Naive thymus-derived CD4-positive, alpha-beta T cell (primary cell): ENCODE measurements at regions of chr2 and their contacts with region 1.

Region 1: GRCh38 chr2:25376750-25377621 is 35.3 kb upstream of the DNMT3A start:
- DNase-seq: peak; percentile 89 to 94 (median 92)
- ATAC-seq: peak; percentile 99
- H3K4me3 ChIP-seq: peak overlapping the region; percentile 53
- H3K4me3 Mint-ChIP-seq: peak overlapping the region; percentile 67 to 87 (median 74)
- H3K27ac ChIP-seq: peak overlapping the region; percentile 66
- H3K27ac Mint-ChIP-seq: peak overlapping the region; percentile 90 to 97 (median 94)
- H3K4me1 ChIP-seq: peaks cover 28 to 31% of the 10 kb centered on the region in 2 donors
- H3K4me1 Mint-ChIP-seq: peaks cover 29 to 49% (median 32%) of the 10 kb centered on the region in 7 donors
- H3K27me3 ChIP-seq: no peaks in the 10 kb centered on the region
- H3K27me3 Mint-ChIP-seq: no peaks in the 10 kb centered on the region

Region 2: DNA sequence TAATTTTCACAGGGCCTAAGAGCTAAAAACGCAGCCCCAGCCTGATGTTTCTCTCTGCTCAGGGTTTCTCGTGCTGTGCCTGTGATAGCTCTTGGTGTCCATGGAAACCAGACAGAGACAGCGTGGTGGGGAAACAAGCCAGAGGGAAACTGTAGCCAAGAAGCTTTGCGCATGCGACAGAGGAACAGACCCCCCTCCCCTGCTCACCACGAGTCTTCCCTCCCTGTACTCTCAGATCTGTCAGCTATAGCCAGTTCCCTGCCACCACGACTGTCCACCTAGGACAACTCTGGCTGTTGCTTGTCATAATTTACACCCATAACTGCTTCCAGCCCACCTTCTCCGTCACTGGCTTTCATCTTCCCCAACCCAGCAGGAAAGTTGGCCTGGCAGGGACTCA is 392.1 kb before region 1 on chr2:
- CTCF ChIA-PET with region 1: no interaction called
- POLR2A ChIA-PET with region 1: no interaction called
- intact Hi-C with region 1: no loop called
- DNase-seq: no peak
- ATAC-seq: peak; percentile 37
- H3K4me3 ChIP-seq: no peak overlapping the region
- H3K4me3 Mint-ChIP-seq: no peak overlapping the region
- H3K27ac ChIP-seq: no peak overlapping the region
- H3K27ac Mint-ChIP-seq: no peak overlapping the region
- H3K4me1 ChIP-seq: no peaks in the 10 kb centered on the region
- H3K4me1 Mint-ChIP-seq: no peaks in the 10 kb centered on the region
- H3K27me3 ChIP-seq: no peaks in the 10 kb centered on the region
- H3K27me3 Mint-ChIP-seq: peaks cover 0 to 6% (median 0%) of the 10 kb centered on the region in 5 donors

Region 3: GRCh38 chr2:25177211-25177611 is 199.8 kb before region 1 on chr2:
- CTCF ChIA-PET with region 1: no interaction called
- POLR2A ChIA-PET with region 1: no interaction called
- intact Hi-C with region 1: no loop called
- DNase-seq: no peak
- ATAC-seq: no peak
- H3K4me3 ChIP-seq: no peak overlapping the region
- H3K4me3 Mint-ChIP-seq: no peak overlapping the region
- H3K27ac ChIP-seq: no peak overlapping the region
- H3K27ac Mint-ChIP-seq: no peak overlapping the region
- H3K4me1 ChIP-seq: no peaks in the 10 kb centered on the region
- H3K4me1 Mint-ChIP-seq: peaks cover 0 to 6% (median 3%) of the 10 kb centered on the region in 7 donors
- H3K27me3 ChIP-seq: no peaks in the 10 kb centered on the region
- H3K27me3 Mint-ChIP-seq: peaks cover 15 to 37% (median 18%) of the 10 kb centered on the region in 5 donors

Region 4: DNA sequence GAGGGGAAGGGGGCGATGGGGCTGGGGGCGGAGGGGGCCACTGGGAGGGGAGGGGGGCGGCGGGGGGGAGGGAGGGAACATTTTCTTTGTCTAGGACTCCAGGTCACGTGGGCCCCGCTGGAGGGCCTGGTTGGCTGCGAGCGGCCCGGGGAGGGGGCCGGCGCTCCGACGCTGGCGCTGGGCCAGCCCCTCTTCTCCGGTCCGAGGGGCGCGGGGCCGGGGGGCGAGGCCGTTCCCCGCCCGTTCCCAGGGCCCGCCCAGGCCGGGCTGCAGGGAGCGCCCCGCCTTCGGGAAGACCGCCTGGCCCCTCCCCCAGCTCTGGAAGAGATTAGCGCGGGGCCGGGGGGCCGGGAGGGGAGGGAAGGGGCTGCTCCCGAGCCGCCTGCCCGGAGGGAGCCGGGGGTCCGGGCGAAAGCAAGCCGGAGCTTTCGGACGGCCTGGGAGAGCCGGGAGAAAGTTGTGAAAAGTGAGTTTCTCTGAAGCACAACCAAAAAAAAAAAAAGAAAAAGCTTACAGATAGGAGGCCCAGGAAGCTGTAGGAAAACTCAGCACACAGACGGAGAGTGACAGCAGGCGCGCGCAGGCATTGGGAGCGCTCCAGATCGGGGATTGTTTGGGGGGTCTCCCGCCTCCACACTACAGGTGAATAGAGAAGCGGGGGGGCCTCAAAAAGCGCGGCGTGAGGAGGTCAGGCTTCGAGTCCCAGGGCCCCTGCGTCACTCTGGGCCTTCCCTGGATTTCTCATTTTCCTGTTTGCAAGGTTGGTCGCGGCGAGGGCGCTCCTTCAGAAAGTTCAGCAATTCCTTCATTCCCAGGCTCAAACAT is 124.5 kb before region 1 on chr2:
- CTCF ChIA-PET with region 1: interaction called, 4 read pairs
- POLR2A ChIA-PET with region 1: interaction called, 3 read pairs
- intact Hi-C with region 1: loop called (anchors 1 to 2 kb)
- DNase-seq: peak; percentile 36 to 67 (median 56)
- ATAC-seq: peak; percentile 77
- H3K4me3 ChIP-seq: peak overlapping the region; percentile 53
- H3K4me3 Mint-ChIP-seq: peak overlapping the region; percentile 82 to 91 (median 90)
- H3K27ac ChIP-seq: peak overlapping the region; percentile 87
- H3K27ac Mint-ChIP-seq: peak overlapping the region; percentile 70 to 93 (median 85)
- H3K4me1 ChIP-seq: peaks cover 6 to 22% of the 10 kb centered on the region in 2 donors
- H3K4me1 Mint-ChIP-seq: peaks cover 26 to 55% (median 45%) of the 10 kb centered on the region in 7 donors
- H3K27me3 ChIP-seq: no peaks in the 10 kb centered on the region
- H3K27me3 Mint-ChIP-seq: no peaks in the 10 kb centered on the region

Region 5: GRCh38 chr2:25265802-25266201 is 111.2 kb before region 1 on chr2:
- CTCF ChIA-PET with region 1: no interaction called
- POLR2A ChIA-PET with region 1: no interaction called
- intact Hi-C with region 1: no loop called
- DNase-seq: peak in 3 of 9 donors; percentile 31 to 56 (median 42)
- ATAC-seq: peak; percentile 67
- H3K4me3 ChIP-seq: no peak overlapping the region
- H3K4me3 Mint-ChIP-seq: peak overlapping the region in 7 of 10 donors; percentile 14 to 58 (median 38)
- H3K27ac ChIP-seq: peak overlapping the region; percentile 60
- H3K27ac Mint-ChIP-seq: peak overlapping the region in 7 of 9 donors; percentile 64 to 90 (median 83)
- H3K4me1 ChIP-seq: peaks cover 14 to 30% of the 10 kb centered on the region in 2 donors
- H3K4me1 Mint-ChIP-seq: peaks cover 26 to 69% (median 60%) of the 10 kb centered on the region in 7 donors
- H3K27me3 ChIP-seq: no peaks in the 10 kb centered on the region
- H3K27me3 Mint-ChIP-seq: no peaks in the 10 kb centered on the region

Region 6: DNA sequence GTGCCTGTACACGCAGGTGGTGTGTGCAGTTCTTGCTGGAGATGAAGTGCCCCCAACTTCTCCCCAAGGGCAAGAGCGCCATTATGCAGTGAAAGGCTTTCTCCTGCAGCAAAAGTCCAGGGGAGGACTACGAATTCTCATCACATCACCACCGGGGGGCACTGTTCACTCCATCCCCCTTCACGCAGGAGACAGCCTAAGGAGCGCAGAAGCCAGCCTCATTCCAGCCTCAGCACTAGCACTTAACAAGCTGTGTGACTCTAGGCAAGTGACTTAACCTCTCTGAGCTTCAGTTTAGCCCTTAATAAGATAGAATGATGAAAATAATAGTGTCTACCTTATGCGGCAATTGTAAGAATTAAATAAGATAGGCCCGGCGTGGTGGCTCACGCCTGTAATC is 67.6 kb before region 1 on chr2:
- CTCF ChIA-PET with region 1: interaction called, 12 read pairs
- POLR2A ChIA-PET with region 1: interaction called, 5 read pairs
- intact Hi-C with region 1: loop called (anchors 1 kb)
- DNase-seq: peak; percentile 48 to 70 (median 62)
- ATAC-seq: peak; percentile 72
- H3K4me3 ChIP-seq: no peak overlapping the region
- H3K4me3 Mint-ChIP-seq: peak overlapping the region in 5 of 10 donors; percentile 13 to 47 (median 28)
- H3K27ac ChIP-seq: no peak overlapping the region
- H3K27ac Mint-ChIP-seq: peak overlapping the region in 8 of 9 donors; percentile 36 to 89 (median 66)
- H3K4me1 ChIP-seq: peaks cover 21 to 60% of the 10 kb centered on the region in 2 donors
- H3K4me1 Mint-ChIP-seq: peaks cover 48 to 95% (median 80%) of the 10 kb centered on the region in 7 donors
- H3K27me3 ChIP-seq: no peaks in the 10 kb centered on the region
- H3K27me3 Mint-ChIP-seq: no peaks in the 10 kb centered on the region

Region 7: DNA sequence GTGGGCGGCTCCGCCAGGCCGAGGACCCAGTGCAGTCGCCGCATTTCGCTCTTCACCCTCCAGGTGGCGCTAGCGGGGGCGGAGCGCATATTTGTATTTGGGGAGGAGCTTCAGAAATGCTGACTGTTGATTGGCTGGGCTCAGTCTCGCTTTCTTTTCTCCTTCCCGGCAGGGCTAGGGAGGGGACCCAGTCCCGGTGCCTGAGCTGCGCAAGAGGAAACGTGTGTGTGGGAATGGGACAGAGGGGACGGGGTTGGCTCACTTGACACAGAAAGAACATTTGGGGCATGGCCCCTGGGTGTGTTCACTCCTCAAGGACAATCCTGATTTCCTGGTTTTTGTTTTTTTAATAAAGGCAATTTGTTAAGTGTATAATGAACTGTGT is 14.9 kb before region 1 on chr2:
- CTCF ChIA-PET with region 1: interaction called, 34 read pairs
- POLR2A ChIA-PET with region 1: interaction called, 35 read pairs
- intact Hi-C with region 1: loop called (anchors 1 kb)
- DNase-seq: peak; percentile 86 to 99 (median 93)
- ATAC-seq: peak; percentile 98
- H3K4me3 ChIP-seq: peak overlapping the region; percentile 78
- H3K4me3 Mint-ChIP-seq: peak overlapping the region; percentile 83 to 95 (median 89)
- H3K27ac ChIP-seq: peak overlapping the region; percentile 81
- H3K27ac Mint-ChIP-seq: peak overlapping the region; percentile 84 to 96 (median 92)
- H3K4me1 ChIP-seq: peaks cover 3 to 4% of the 10 kb centered on the region in 2 donors
- H3K4me1 Mint-ChIP-seq: peaks cover 11 to 32% (median 25%) of the 10 kb centered on the region in 7 donors
- H3K27me3 ChIP-seq: no peaks in the 10 kb centered on the region
- H3K27me3 Mint-ChIP-seq: no peaks in the 10 kb centered on the region

Region 8: DNA sequence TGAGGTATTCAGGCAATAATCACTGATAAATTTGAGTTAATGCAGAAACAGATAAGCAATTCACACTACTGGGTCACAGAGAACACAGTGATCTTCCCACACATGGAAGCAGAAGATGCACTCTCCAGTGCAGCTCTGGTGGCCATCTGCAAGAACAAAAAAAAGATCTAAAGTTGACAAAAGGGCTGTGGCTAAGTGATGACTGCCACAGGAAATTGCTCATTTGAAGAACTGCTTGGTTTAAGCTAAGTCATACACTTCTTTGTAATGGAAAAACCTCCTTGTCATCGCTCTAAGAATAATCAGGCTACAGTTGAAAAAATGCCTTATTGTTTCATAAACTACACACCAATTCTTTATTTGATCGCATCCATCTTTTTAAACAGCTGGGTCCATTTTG is 181.3 kb after region 1 on chr2:
- CTCF ChIA-PET with region 1: no interaction called
- POLR2A ChIA-PET with region 1: no interaction called
- intact Hi-C with region 1: loop called in 1 of 2 experiments (anchors 2 kb)
- DNase-seq: peak in 6 of 9 donors; percentile 25 to 48 (median 32)
- ATAC-seq: peak; percentile 94
- H3K4me3 ChIP-seq: no peak overlapping the region
- H3K4me3 Mint-ChIP-seq: peak overlapping the region in 1 of 10 donors; percentile 44
- H3K27ac ChIP-seq: no peak overlapping the region
- H3K27ac Mint-ChIP-seq: peak overlapping the region in 3 of 9 donors; percentile 20 to 92 (median 41)
- H3K4me1 ChIP-seq: peaks cover 6 to 8% of the 10 kb centered on the region in 2 donors
- H3K4me1 Mint-ChIP-seq: peaks cover 17 to 56% (median 34%) of the 10 kb centered on the region in 7 donors
- H3K27me3 ChIP-seq: no peaks in the 10 kb centered on the region
- H3K27me3 Mint-ChIP-seq: no peaks in the 10 kb centered on the region

Region 9: DNA sequence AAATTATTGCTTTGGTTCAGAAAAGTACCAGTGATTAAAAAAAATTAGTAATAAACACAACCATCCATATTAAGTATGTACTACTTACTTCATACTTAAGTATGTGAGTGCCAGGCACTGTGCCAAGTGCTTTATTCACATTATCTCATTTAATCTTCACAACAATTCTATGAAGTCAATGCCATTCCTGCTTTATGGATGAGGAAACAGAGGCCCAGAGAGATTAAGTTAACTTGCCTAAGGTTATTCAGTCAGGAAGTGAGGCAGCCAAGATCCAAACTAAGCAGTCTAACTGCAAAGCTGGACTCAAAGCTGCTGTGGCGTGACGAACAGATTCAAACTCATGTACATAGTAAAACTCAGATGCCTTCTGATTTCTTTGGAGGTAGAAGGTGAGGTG is 274.1 kb after region 1 on chr2:
- CTCF ChIA-PET with region 1: no interaction called
- POLR2A ChIA-PET with region 1: no interaction called
- intact Hi-C with region 1: no loop called
- DNase-seq: no peak
- ATAC-seq: no peak
- H3K4me3 ChIP-seq: no peak overlapping the region
- H3K4me3 Mint-ChIP-seq: no peak overlapping the region
- H3K27ac ChIP-seq: no peak overlapping the region
- H3K27ac Mint-ChIP-seq: no peak overlapping the region
- H3K4me1 ChIP-seq: no peaks in the 10 kb centered on the region
- H3K4me1 Mint-ChIP-seq: peaks cover 4 to 20% (median 6%) of the 10 kb centered on the region in 7 donors
- H3K27me3 ChIP-seq: no peaks in the 10 kb centered on the region
- H3K27me3 Mint-ChIP-seq: no peaks in the 10 kb centered on the region